Endothelial cell of umbilical vein (primary cell): ENCODE measurements at regions of chr7 and their contacts with region 1.

Region 1: GRCh38 chr7:93245525-93246432 is 13.6 kb downstream of the VPS50 start:
- DNase-seq: peak; percentile 59
- H3K4me3 ChIP-seq: no peak overlapping the region
- H3K27ac ChIP-seq: no peak overlapping the region
- H3K4me1 ChIP-seq: no peaks in the 10 kb centered on the region
- H3K27me3 ChIP-seq: no peaks in the 10 kb centered on the region
- CTCF ChIP-seq: peak; percentile 19 to 31
- POLR2A ChIP-seq: no peak

Region 2: GRCh38 chr7:93150200-93150835 is 95.5 kb before region 1 on chr7:
- CTCF ChIA-PET with region 1: no interaction called
- POLR2A ChIA-PET with region 1: no interaction called
- dilution Hi-C with region 1: no loop called
- intact Hi-C with region 1: no loop called
- DNase-seq: no peak
- H3K4me3 ChIP-seq: no peak overlapping the region
- H3K27ac ChIP-seq: no peak overlapping the region
- H3K4me1 ChIP-seq: peaks cover 20% of the 10 kb centered on the region
- H3K27me3 ChIP-seq: no peaks in the 10 kb centered on the region
- CTCF ChIP-seq: no peak
- POLR2A ChIP-seq: no peak

Region 3: GRCh38 chr7:93374345-93374940 is 128.7 kb after region 1 on chr7:
- CTCF ChIA-PET with region 1: interaction called, 50 read pairs
- POLR2A ChIA-PET with region 1: no interaction called
- dilution Hi-C with region 1: no loop called
- intact Hi-C with region 1: loop called (anchors 1 kb)
- DNase-seq: peak; percentile 54
- H3K4me3 ChIP-seq: no peak overlapping the region
- H3K27ac ChIP-seq: no peak overlapping the region
- H3K4me1 ChIP-seq: no peaks in the 10 kb centered on the region
- H3K27me3 ChIP-seq: peaks cover 11 to 13% of the 10 kb centered on the region in 2 experiments
- CTCF ChIP-seq: peak; percentile 50 to 69
- POLR2A ChIP-seq: no peak

Region 4: GRCh38 chr7:93442478-93443224 is 196.9 kb after region 1 on chr7:
- CTCF ChIA-PET with region 1: interaction called, 6 read pairs
- POLR2A ChIA-PET with region 1: no interaction called
- dilution Hi-C with region 1: no loop called
- intact Hi-C with region 1: loop called (anchors 5 kb)
- DNase-seq: peak; percentile 26
- H3K4me3 ChIP-seq: no peak overlapping the region
- H3K27ac ChIP-seq: no peak overlapping the region
- H3K4me1 ChIP-seq: no peaks in the 10 kb centered on the region
- H3K27me3 ChIP-seq: peaks cover 3 to 4% of the 10 kb centered on the region in 2 experiments
- CTCF ChIP-seq: peak; percentile 63 to 70
- POLR2A ChIP-seq: no peak

Region 5: DNA sequence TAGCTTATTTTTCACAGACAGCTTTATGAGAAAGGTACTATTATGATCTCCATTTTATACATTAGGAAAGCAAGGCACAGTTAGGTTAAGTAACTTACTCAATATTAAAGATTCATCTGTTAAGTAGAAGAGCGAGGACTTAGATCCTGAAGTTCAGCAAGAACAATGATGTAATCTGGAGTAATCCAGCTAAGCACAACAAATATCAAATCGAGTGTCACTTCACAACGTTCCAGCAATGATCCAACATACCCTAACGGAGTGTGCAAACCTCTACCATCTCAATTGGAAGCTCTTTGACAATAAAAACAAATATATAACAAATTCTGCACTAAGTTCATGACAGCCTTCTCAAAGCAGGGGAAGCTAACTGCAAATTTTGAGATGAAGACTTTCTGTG is 207.5 kb after region 1 on chr7:
- CTCF ChIA-PET with region 1: no interaction called
- POLR2A ChIA-PET with region 1: no interaction called
- dilution Hi-C with region 1: no loop called
- intact Hi-C with region 1: no loop called
- DNase-seq: no peak
- H3K4me3 ChIP-seq: no peak overlapping the region
- H3K27ac ChIP-seq: no peak overlapping the region
- H3K4me1 ChIP-seq: no peaks in the 10 kb centered on the region
- H3K27me3 ChIP-seq: peaks cover 7 to 10% of the 10 kb centered on the region in 2 experiments
- CTCF ChIP-seq: no peak
- POLR2A ChIP-seq: no peak

Region 6: GRCh38 chr7:93551063-93551904 is 305.5 kb after region 1 on chr7:
- CTCF ChIA-PET with region 1: interaction called, 190 read pairs
- POLR2A ChIA-PET with region 1: no interaction called
- dilution Hi-C with region 1: no loop called
- intact Hi-C with region 1: loop called (anchors 1 kb)
- DNase-seq: peak; percentile 54
- H3K4me3 ChIP-seq: no peak overlapping the region
- H3K27ac ChIP-seq: no peak overlapping the region
- H3K4me1 ChIP-seq: no peaks in the 10 kb centered on the region
- H3K27me3 ChIP-seq: peaks cover 4 to 6% of the 10 kb centered on the region in 2 experiments
- CTCF ChIP-seq: peak; percentile 44 to 52
- POLR2A ChIP-seq: no peak

Region 7: DNA sequence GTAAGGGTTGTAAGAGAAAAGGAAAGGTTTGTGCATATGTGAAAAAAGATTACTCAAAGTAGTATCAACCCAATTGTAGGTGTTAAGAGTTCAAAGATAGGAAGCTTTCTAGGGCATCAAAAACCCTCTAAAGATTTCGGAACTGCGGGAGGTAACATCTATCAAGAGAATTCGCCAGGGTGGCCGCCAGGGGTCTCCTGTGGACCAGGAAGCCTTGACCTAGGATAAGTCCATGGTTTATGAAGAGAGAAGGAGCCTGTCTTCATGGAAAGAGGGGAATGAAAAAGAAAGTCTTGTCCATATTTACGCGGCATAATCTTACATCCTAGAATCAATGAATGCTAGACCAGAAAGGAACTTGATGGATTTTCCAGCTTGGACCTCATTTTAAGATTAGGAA is 469.5 kb after region 1 on chr7:
- CTCF ChIA-PET with region 1: interaction called, 3 read pairs
- POLR2A ChIA-PET with region 1: no interaction called
- dilution Hi-C with region 1: no loop called
- intact Hi-C with region 1: loop called (anchors 10 kb)
- DNase-seq: peak; percentile 58
- H3K4me3 ChIP-seq: no peak overlapping the region
- H3K27ac ChIP-seq: no peak overlapping the region
- H3K4me1 ChIP-seq: no peaks in the 10 kb centered on the region
- H3K27me3 ChIP-seq: peaks cover 15 to 26% of the 10 kb centered on the region in 2 experiments
- CTCF ChIP-seq: peak; percentile 71 to 72
- POLR2A ChIP-seq: no peak

Region 8: DNA sequence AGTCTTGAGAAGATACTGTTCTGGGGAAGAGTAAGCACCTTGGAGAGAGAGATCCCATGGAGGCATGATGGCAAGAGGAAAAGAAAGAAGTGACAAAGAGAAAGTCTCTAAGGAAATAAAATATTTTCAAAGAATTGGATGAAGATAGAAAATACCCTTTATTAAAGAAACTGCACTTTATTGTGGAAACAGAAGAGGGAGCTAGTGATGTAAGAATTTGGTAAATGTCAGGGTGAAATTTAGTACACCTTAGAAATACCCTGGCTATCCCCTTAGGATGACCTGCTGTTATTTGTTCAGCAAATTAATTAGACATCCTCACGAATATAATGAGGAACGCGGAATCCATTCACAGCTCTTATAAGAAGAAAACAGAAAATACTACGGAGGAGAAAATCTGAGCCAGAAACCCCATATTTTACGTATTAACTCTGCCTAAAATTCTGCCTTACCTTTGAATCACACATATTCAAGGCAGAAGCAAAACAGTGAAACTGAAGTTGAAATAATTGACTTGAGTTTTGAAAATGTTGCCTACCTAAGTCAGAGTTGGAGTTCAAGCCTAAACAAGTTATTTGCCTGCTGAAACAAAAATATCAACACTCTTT is 554.1 kb after region 1 on chr7:
- CTCF ChIA-PET with region 1: interaction called, 3 read pairs
- POLR2A ChIA-PET with region 1: no interaction called
- dilution Hi-C with region 1: no loop called
- intact Hi-C with region 1: loop called (anchors 10 kb)
- DNase-seq: peak; percentile 43
- H3K4me3 ChIP-seq: no peak overlapping the region
- H3K27ac ChIP-seq: no peak overlapping the region
- H3K4me1 ChIP-seq: no peaks in the 10 kb centered on the region
- H3K27me3 ChIP-seq: no peaks in the 10 kb centered on the region
- CTCF ChIP-seq: peak; percentile 32 to 45
- POLR2A ChIP-seq: no peak

Region 9: DNA sequence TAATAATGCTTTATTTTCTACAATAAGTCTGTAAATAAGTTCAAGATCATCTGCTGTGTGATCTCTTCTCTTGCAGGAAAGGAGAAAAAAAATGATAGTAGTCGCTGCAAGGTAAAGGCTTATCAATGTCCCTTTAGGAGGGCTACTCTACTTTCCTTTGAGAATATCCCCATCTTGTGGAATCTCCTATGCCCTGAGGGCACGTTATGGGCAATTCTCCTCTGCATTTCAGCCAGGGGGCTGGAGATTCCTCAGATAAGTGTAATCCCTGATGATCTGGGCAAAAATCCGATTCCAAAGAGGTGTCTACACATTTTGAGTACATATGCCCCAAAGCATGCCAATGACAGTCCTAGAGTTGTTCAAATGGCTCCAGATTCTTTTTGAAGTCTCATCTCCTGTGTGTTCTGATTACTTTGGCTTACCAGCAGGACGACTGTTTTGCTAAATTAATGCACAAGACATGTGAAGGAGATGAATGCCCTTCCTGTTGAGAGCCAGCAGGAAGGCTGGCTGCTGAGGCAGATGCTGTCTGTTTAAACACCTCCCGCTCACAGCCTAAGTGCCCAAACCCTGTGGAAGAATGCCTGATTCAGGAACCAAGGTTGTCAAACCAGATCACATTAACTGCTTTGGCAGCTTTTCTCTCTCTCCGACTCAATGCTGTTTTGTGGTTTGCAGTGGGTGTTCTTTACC is 977.7 kb after region 1 on chr7:
- CTCF ChIA-PET with region 1: no interaction called
- POLR2A ChIA-PET with region 1: no interaction called
- dilution Hi-C with region 1: no loop called
- intact Hi-C with region 1: loop called (anchors 2 kb)
- DNase-seq: peak; percentile 77
- H3K4me3 ChIP-seq: no peak overlapping the region
- H3K27ac ChIP-seq: no peak overlapping the region
- H3K4me1 ChIP-seq: peaks cover 8% of the 10 kb centered on the region
- H3K27me3 ChIP-seq: no peaks in the 10 kb centered on the region
- CTCF ChIP-seq: peak; percentile 55 to 67
- POLR2A ChIP-seq: no peak